Activated CD4-positive, alpha-beta T cell treated with anti-CD3 and anti-CD28 coated beads, Interleukin-2, amount 10 ng/mL, durations not matched to agents 24 days and 14 days (primary cell): ENCODE measurements at regions of chr15 and their contacts with region 1.

Region 1: GRCh38 chr15:77907824-77908751 is 169.4 kb downstream of the TBC1D2B start:
- DNase-seq: no peak
- H3K4me3 Mint-ChIP-seq: no peak overlapping the region
- H3K27ac Mint-ChIP-seq: no peak overlapping the region
- H3K4me1 Mint-ChIP-seq: peaks cover 4% of the 10 kb centered on the region
- H3K27me3 Mint-ChIP-seq: peaks cover 3% of the 10 kb centered on the region

Region 2: GRCh38 chr15:77966540-77967290 is 58.6 kb after region 1 on chr15:
- intact Hi-C with region 1: no loop called
- DNase-seq: peak; percentile 86
- H3K4me3 Mint-ChIP-seq: no peak overlapping the region
- H3K27ac Mint-ChIP-seq: peak overlapping the region; percentile 12
- H3K4me1 Mint-ChIP-seq: peaks cover 4% of the 10 kb centered on the region
- H3K27me3 Mint-ChIP-seq: peaks cover 45% of the 10 kb centered on the region

Region 3: GRCh38 chr15:78241007-78241406 is 332.9 kb after region 1 on chr15:
- intact Hi-C with region 1: loop called (anchors 1 kb)
- DNase-seq: peak; percentile 94
- H3K4me3 Mint-ChIP-seq: no peak overlapping the region
- H3K27ac Mint-ChIP-seq: no peak overlapping the region
- H3K4me1 Mint-ChIP-seq: peaks cover 3% of the 10 kb centered on the region
- H3K27me3 Mint-ChIP-seq: peaks cover 5% of the 10 kb centered on the region